ENCODE measurements at regions of chr5 and their contacts with region 1.

Region 1: GRCh38 chr5:175657593-175658271 is at the start of gene HRH2:
- DNase-seq: peak; percentile 60
- H3K4me3 Mint-ChIP-seq: peak within 1 kb of the TSS; percentile 99
- H3K27ac Mint-ChIP-seq: peak within 1 kb of the TSS; percentile 95
- H3K4me1 Mint-ChIP-seq: peaks cover 80% of the 10 kb centered on the region
- H3K27me3 Mint-ChIP-seq: no peaks in the 10 kb centered on the region
- total RNA-seq, gene HRH2: 34.3 and 37.1 TPM in 2 replicates

Region 2: DNA sequence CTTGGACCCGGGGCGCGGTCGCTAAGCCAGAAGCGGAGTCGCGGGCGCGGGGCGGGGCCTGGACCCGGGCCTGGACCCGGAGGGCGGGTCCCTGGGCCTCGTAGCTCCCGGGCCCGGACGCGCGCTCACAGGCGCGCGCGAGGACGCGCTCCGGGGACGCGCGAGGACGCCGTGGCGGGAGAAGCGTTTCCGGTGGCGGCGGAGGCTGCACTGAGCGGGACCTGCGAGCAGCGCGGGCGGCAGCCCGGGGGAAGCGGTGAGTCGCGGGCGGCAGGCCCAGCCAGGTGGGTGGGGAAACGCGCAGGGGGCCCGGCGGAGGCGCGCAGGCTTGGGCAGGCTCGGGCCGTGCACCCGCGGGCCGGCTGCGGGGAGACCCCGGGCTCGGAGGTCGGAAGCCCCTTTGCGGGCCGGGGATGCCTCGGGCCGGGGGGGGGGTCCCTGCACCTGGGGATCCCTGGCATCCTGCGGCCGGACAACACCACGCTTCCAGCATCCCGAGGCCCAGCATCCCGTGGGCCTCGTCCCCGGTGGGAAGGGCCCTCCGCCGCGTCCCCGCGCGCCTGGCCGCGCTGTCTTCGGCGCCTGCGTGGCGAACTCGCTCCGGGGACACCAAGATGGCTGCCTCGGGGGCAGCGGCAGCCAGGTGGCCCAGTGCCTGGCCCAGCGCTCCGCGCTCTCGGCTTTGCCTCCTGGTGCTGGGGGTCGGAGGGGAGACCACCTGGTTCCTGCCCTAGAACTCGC is 179.2 kb before region 1 on chr5 and contains the start of gene SFXN1:
- intact Hi-C with region 1: loop called (anchors 2 kb)
- DNase-seq: peak; percentile 82
- H3K4me3 Mint-ChIP-seq: peak within 1 kb of the TSS; percentile 95
- H3K27ac Mint-ChIP-seq: peak within 1 kb of the TSS; percentile 92
- H3K4me1 Mint-ChIP-seq: peaks cover 52% of the 10 kb centered on the region
- H3K27me3 Mint-ChIP-seq: peaks cover 8% of the 10 kb centered on the region
- total RNA-seq, gene SFXN1: 318 and 326 TPM in 2 replicates

Region 3: GRCh38 chr5:175517818-175518450 is 139.8 kb before region 1 on chr5:
- intact Hi-C with region 1: loop called (anchors 1 kb)
- DNase-seq: peak; percentile 71
- H3K4me3 Mint-ChIP-seq: peak overlapping the region; percentile 67
- H3K27ac Mint-ChIP-seq: peak overlapping the region; percentile 98
- H3K4me1 Mint-ChIP-seq: peaks cover 63% of the 10 kb centered on the region
- H3K27me3 Mint-ChIP-seq: no peaks in the 10 kb centered on the region

Region 4: DNA sequence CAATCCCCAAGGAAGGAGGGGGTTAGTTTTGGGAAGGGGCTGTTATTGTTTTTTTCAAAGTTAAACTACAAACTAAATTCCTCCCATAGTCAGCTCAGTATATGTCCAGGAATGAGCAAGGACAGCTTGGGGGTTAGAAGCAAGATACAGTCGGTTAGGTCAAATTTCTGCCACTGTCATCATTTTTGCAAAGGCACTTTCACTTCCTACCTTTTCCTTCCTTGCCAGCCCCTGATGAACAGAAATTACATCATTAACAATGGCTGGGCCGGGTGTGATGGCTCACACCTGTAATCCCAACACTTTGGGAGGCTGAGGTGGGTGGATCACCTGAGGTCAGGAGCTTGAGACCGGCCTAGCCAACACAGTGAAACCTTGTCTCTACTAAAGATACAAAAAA is 51.3 kb before region 1 on chr5:
- intact Hi-C with region 1: no loop called
- DNase-seq: no peak
- H3K4me3 Mint-ChIP-seq: no peak overlapping the region
- H3K27ac Mint-ChIP-seq: no peak overlapping the region
- H3K4me1 Mint-ChIP-seq: peaks cover 11% of the 10 kb centered on the region
- H3K27me3 Mint-ChIP-seq: peaks cover 20% of the 10 kb centered on the region

Region 5: GRCh38 chr5:175617447-175617846 is 40.3 kb before region 1 on chr5:
- intact Hi-C with region 1: loop called (anchors 5 kb)
- DNase-seq: no peak
- H3K4me3 Mint-ChIP-seq: no peak overlapping the region
- H3K27ac Mint-ChIP-seq: no peak overlapping the region
- H3K4me1 Mint-ChIP-seq: peaks cover 13% of the 10 kb centered on the region
- H3K27me3 Mint-ChIP-seq: peaks cover 6% of the 10 kb centered on the region

Region 6: GRCh38 chr5:175685701-175686350 is 28.1 kb after region 1 on chr5:
- intact Hi-C with region 1: no loop called
- DNase-seq: no peak
- H3K4me3 Mint-ChIP-seq: no peak overlapping the region
- H3K27ac Mint-ChIP-seq: no peak overlapping the region
- H3K4me1 Mint-ChIP-seq: peaks cover 13% of the 10 kb centered on the region
- H3K27me3 Mint-ChIP-seq: no peaks in the 10 kb centered on the region

Region 7: DNA sequence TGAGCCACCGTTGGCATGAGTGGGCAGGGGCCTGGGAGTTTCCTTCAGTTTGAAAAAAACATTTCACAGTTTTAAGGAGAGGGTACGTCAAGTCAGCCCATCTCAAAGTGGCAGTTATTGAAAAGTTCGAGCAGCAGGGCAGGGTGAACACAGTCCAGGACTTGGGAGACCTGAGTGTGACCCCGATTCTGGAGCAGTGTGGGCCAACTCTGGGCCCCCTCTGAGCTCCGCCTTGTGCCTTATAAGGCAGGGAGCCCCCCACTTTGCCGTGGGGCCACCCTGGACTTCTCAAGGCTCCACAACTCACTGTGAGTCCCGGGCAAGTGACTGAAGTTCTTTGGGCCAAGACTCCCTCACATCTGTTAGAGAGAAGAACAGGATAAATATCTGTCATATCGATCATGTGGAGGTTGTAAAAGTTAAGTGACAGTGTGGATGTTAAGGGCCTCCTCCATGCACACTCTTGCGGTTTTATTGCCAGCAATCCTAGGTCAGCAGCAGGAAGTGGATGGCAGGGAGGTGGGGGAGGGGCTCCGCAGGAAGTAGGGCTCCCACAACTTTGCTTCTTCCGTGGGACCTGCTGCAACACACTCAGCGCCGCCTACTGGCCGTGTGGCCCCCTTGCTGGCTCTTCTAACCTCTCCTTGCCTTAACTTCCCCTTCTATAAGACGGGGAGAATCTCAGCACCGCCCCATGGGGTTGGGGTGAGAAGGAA is 38.6 kb after region 1 on chr5:
- intact Hi-C with region 1: loop called (anchors 1 kb)
- DNase-seq: peak; percentile 70
- H3K4me3 Mint-ChIP-seq: peak overlapping the region; percentile 13
- H3K27ac Mint-ChIP-seq: peak overlapping the region; percentile 80
- H3K4me1 Mint-ChIP-seq: peaks cover 29% of the 10 kb centered on the region
- H3K27me3 Mint-ChIP-seq: no peaks in the 10 kb centered on the region

Region 8: DNA sequence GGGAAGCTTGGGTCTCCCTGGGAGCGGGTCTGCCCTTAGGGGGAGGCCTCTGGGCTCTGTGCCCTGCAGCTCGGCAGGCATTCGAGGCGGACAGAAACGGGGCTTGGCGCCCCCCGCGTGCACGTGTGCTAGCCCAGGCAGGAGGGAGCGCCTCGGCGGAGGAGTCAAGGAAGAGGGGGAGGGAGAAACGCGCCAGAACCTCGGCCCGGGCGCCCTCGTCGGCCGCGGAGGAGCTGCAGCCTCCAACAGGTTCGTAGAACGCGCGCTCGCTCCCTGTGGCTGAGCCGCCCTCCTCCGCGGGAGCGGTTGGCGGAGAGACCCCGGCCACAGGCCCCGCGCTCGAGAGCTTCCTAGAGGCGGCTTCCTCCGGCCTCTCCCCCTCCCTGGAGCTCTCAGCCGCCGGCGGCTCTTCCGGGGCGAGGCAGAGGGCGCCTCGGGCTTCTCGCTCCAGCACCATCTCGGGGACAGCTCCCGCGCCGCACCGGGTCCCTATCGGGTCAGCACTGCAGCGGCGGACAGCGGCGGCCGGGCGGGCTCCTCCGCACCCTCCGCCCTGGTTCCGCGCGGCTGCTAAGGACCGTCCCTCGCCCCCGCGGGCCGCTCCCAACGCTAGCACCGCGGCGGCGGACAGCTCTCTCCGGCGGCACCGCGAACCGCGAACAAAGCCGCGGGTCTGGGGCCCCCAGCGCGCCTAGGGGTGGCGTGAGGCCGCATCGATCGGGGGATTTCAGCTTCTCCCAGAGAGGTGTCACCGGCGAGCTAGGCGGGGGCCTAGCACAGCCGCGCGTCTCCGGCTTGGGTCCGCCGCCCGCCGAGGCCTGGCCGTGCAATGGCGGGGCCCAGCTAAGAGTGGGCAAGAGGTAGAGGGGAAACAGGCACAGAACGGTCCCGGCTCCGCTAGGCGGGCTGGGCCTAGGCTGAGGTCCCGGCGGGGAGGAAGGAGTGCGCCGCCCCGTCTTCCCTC is 139.1 kb after region 1 on chr5:
- intact Hi-C with region 1: loop called (anchors 5 kb)
- DNase-seq: peak; percentile 79
- H3K4me3 Mint-ChIP-seq: no peak overlapping the region
- H3K27ac Mint-ChIP-seq: no peak overlapping the region
- H3K4me1 Mint-ChIP-seq: no peaks in the 10 kb centered on the region
- H3K27me3 Mint-ChIP-seq: peaks cover 37% of the 10 kb centered on the region

Region 9: DNA sequence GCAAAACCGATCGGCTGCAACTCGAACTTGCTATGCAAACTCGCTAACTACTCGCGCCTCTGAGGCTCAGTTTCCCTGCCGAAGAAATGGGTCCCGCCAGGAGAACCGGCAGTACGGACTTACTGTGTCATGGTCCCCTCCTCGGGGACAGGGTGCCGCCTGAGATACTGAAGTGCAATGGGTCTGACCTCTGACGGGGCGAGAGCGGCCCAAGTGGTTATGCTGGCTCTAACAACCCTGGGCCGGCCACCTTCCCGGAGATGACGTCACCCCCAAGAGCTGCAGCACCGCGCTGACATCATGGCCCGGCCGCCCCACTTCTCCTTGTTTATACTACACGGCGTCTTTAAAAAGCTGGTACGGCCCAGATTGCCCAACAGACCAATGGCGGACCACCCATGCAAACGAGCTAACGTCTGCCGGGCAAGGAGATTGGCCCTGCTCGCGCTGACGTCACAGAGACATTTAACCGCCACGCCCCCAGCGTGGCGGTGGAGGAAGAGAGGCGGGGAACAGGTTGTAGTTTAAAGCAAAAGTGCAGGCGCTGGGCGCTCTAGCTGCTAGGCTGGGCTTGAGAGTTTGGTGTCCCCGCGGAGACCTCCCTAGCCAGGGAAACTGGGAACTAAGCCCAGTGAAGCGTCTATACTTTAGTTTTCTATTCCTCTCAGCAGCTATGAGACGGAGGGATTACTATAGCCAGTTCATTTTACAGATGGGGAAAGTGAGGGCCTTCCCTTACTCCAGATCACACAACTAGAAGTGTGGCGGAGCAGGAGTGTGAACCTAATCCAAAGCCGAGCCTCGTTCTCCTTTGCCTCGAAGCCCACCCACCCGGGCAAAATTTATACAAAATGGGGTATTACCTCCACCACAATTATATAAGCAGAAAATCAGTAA is 880.1 kb after region 1 on chr5:
- intact Hi-C with region 1: loop called (anchors 2 kb)
- DNase-seq: peak; percentile 98
- H3K4me3 Mint-ChIP-seq: peak overlapping the region; percentile 98
- H3K27ac Mint-ChIP-seq: peak overlapping the region; percentile 96
- H3K4me1 Mint-ChIP-seq: peaks cover 58% of the 10 kb centered on the region
- H3K27me3 Mint-ChIP-seq: no peaks in the 10 kb centered on the region